ENCODE measurements at regions of chr20 and their contacts with region 1.

Region 1: DNA sequence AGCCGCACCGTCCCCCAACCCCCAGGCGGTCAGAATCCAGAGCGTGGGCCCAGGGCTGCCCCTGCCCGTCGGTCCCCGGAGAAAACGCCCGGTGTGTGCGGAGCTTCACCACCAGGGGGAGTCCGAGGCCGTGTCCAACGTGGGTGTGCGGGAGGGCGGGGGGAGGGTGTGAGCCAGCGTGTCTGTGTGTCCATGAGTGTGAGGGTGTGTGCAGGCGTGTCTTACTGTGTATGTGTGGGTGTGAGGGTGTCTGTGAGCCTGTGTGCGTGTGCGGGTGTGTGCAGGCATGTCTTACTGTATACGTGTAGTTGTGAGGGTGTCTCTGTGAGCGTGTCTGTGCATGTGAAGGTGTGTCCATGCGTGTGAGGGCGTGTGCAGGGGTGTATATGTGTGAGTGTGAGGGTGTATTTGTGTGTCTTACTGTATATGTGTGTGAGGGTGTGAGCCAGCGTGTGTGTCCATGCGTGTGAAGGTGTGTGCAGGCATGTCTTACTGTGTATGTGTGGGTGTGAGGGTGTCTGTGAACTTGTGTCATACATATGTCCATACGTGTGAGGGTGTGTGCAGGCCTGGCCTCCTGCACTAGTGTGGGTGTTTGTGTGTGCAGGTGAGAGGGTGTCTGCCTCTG is 24.6 kb upstream of the GATA5 start:
- DNase-seq: peak; percentile 83
- ATAC-seq: peak; percentile 67 to 71

Region 2: DNA sequence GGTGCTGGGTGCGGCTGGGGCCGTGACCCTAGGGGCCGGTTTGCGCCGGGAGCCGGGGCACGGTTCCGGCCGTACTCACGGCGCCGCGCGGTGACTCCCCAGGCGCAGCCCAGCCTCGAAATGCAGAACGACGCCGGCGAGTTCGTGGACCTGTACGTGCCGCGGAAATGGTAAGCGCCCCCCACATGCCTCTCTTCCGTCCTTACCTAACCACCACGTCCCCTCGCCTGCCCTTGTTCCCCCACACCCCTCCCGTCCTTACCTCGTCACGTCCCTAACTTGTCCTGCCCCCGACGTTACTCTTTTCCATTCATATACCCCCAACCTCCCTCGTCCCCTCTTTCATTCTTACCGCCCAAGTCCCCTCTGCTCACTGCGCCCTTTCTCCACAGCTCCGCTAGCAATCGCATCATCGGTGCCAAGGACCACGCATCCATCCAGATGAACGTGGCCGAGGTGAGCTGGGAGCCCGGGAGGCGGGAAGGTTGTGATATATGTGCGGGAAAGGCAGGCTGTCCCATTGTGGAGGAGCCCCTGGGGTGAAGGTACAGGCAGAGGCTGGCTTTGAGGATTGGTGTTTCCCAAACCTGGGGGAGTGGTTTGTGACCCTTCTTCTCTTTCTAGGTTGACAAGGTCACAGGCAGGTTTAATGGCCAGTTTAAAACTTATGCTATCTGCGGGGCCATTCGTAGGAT is 113.0 kb before region 1 on chr20:
- intact Hi-C with region 1: no loop called
- DNase-seq: no peak
- ATAC-seq: no peak

Region 3: GRCh38 chr20:62409931-62410745 is 90.2 kb before region 1 on chr20:
- intact Hi-C with region 1: loop called in 1 of 2 experiments (anchors 2 kb)
- DNase-seq: peak; percentile 48
- ATAC-seq: peak in 1 of 2 donors; percentile 10

Region 4: GRCh38 chr20:62616728-62617621 is 116.6 kb after region 1 on chr20:
- intact Hi-C with region 1: loop called (anchors 2 to 5 kb)
- DNase-seq: peak; percentile 82
- ATAC-seq: peak; percentile 79 to 87

Region 5: DNA sequence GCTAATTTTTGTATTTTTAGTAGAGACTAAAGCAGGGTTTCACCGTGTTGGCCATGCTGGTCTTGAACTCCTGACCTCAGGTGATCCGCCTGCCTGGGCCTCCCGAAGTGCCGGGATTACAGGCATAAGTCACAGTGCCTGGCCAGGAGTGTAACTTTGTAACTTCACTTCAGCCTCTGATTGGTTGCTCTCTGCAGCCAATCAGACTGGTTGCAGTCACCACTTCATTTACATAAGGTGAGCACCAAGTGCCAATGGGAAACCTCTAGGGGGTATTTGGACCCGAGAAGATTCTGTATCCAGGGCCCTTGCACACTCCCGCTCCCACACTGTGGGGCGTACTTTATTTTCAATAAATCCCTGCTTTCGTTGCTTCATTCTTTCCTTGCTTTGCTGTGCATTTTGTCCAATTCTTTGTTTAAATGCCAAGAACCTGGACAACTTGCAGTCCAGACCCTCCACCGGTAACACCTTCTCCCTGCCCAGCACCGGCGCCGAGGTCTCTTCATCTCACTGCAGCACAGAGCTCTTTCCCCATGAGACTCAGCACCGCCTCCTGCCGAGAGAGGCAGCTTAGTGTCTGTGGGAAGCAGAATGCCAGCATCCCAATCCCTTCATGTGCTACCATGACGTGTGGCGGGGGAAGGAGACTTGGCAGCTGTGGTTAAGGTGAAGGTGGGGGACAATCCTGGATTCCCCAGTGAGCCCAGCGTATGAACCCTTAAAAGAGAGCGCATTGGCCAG is 282.0 kb after region 1 on chr20:
- intact Hi-C with region 1: loop called in 1 of 2 experiments (anchors 10 kb)
- DNase-seq: no peak
- ATAC-seq: no peak

Region 6: DNA sequence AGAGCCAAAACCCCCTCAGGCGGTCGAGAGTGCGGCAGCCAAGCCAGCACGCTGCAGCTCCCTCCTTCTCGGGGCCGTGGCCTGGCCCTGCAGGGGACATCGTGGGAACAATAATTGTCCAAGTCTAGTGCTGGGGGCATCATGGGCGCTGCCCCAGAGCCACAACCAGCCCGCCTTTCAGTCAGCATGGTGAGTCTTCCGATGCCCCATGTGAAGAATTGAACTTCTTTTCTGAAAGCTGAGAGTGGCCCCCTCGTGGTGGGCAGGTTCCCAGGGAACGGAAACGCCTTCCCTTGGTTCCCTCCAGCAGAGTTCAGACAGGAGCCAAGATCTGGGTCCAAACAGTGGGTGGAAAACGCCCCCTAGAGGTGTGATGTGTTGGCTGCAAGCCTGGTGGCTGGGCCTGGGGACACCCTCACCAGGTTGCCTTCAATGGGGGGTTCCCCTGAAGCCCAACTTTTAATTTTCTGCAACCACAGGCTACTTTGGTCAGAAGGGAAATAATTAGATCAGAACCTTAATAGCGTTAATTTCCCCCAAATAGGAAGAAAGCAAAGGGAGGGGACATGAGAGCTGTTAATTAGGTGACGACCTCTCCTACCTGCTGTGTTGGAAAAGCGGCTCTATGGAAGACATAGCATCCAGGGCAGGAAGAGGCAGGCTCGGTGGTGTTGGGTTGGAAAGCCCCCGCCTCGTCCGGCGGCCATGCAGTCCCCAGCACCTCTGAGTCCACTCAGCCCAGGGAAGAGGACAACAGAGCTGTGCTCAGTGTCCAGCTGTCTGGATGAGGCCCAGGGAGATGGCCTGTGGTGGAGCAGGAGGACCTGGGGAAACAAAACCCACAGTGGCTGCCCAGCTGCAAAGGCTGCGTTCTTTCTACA is 291.2 kb after region 1 on chr20:
- intact Hi-C with region 1: loop called (anchors 2 to 10 kb)
- DNase-seq: peak; percentile 83
- ATAC-seq: peak in 1 of 2 donors; percentile 1

Region 7: GRCh38 chr20:62832212-62832922 is 332.0 kb after region 1 on chr20:
- intact Hi-C with region 1: no loop called
- DNase-seq: peak; percentile 34
- ATAC-seq: peak; percentile 24 to 29

Measured in left cardiac atrium (tissue), 4 donors.